Sciatic nerve (tissue), 2 donors: ENCODE measurements at regions of chr19 and their contacts with region 1.

Region 1: GRCh38 chr19:20077791-20078463 is at the start of gene ZNF90:
- DNase-seq: peak; percentile 97
- ATAC-seq: peak; percentile 99
- total RNA-seq, gene ZNF90: 5.1 TPM

Region 2: GRCh38 chr19:19997656-19998268 is 80.2 kb before region 1 on chr19:
- intact Hi-C with region 1: no loop called
- DNase-seq: no peak
- ATAC-seq: no peak

Region 3: GRCh38 chr19:21440321-21440720 is 1362.4 kb after region 1 on chr19:
- intact Hi-C with region 1: loop called (anchors 5 kb)
- DNase-seq: no peak
- ATAC-seq: no peak